ENCODE measurements at regions of chr22 and their contacts with region 1.

Region 1: GRCh38 chr22:45082795-45083194 is 73.0 kb upstream of the PHF21B start:
- DNase-seq: peak; percentile 72
- ATAC-seq: peak; percentile 80
- H3K4me3 Mint-ChIP-seq: no peak overlapping the region
- H3K27ac Mint-ChIP-seq: no peak overlapping the region
- H3K4me1 Mint-ChIP-seq: peaks cover 21% of the 10 kb centered on the region
- H3K27me3 Mint-ChIP-seq: peaks cover 5% of the 10 kb centered on the region
- CTCF ChIP-seq: peak; percentile 25; the same call in 1 of the 2 replicates

Region 2: DNA sequence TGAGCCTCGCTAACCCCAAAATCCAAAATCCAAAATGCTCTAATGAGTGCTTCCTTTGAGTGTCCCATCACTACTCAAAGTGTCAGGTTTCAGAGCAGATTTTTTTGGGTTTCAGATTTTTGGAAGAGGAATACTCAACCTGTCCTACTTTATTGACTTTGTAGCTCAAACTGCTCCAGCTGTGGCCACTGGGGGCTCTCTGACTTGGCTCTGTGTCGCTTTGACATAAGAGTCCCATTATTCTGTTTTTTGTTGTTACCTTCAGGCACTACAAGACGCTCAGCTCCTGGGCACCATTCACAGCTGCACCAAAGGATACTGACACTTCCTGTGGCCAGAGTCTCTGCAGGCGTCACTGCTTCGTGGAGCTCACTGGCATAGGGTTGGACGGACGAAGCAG is 114.1 kb before region 1 on chr22:
- CTCF ChIA-PET with region 1: interaction called, 14 read pairs
- POLR2A ChIA-PET with region 1: no interaction called
- DNase-seq: no peak
- ATAC-seq: peak; percentile 30
- H3K4me3 Mint-ChIP-seq: no peak overlapping the region
- H3K27ac Mint-ChIP-seq: peak overlapping the region; percentile 25
- H3K4me1 Mint-ChIP-seq: peaks cover 83% of the 10 kb centered on the region
- H3K27me3 Mint-ChIP-seq: no peaks in the 10 kb centered on the region
- CTCF ChIP-seq: no peak

Region 3: GRCh38 chr22:44975427-44976262 is 107.2 kb before region 1 on chr22:
- CTCF ChIA-PET with region 1: interaction called, 11 read pairs
- POLR2A ChIA-PET with region 1: no interaction called
- DNase-seq: peak; percentile 96
- ATAC-seq: peak; percentile 82
- H3K4me3 Mint-ChIP-seq: no peak overlapping the region
- H3K27ac Mint-ChIP-seq: no peak overlapping the region
- H3K4me1 Mint-ChIP-seq: peaks cover 65% of the 10 kb centered on the region
- H3K27me3 Mint-ChIP-seq: no peaks in the 10 kb centered on the region
- CTCF ChIP-seq: peak; percentile 89

Region 4: GRCh38 chr22:44990810-44991209 is 92.0 kb before region 1 on chr22:
- CTCF ChIA-PET with region 1: no interaction called
- POLR2A ChIA-PET with region 1: no interaction called
- DNase-seq: no peak
- ATAC-seq: peak; percentile 27; the same call in 1 of the 2 replicates
- H3K4me3 Mint-ChIP-seq: no peak overlapping the region
- H3K27ac Mint-ChIP-seq: peak overlapping the region; percentile 54
- H3K4me1 Mint-ChIP-seq: peaks cover 44% of the 10 kb centered on the region
- H3K27me3 Mint-ChIP-seq: no peaks in the 10 kb centered on the region
- CTCF ChIP-seq: no peak

Region 5: DNA sequence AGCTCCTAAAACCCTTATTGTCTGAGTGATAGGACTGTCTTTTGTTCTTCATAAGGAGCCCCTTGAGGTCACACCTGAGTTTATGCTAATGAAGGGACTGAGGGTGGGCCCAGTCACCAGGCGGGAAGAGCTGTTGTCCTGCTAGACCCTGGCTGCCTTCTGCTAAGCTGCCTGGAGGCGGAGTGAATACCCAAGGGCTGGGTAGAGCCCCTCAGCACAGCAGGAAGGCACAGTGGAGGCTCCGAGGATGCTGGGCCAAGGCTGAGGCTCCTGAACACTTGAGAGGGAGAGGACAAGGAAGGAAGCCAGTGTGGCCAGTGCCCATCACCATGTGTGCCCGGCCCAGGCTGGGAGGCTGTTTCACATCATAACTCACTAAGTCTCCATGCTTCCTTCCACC is 68.1 kb before region 1 on chr22:
- CTCF ChIA-PET with region 1: interaction called, 22 read pairs
- POLR2A ChIA-PET with region 1: no interaction called
- DNase-seq: peak; percentile 49
- ATAC-seq: peak; percentile 81
- H3K4me3 Mint-ChIP-seq: no peak overlapping the region
- H3K27ac Mint-ChIP-seq: no peak overlapping the region
- H3K4me1 Mint-ChIP-seq: peaks cover 29% of the 10 kb centered on the region
- H3K27me3 Mint-ChIP-seq: peaks cover 9% of the 10 kb centered on the region
- CTCF ChIP-seq: no peak

Region 6: GRCh38 chr22:45096256-45096907 is 13.6 kb after region 1 on chr22:
- CTCF ChIA-PET with region 1: interaction called, 11 read pairs
- POLR2A ChIA-PET with region 1: no interaction called
- DNase-seq: peak; percentile 74
- ATAC-seq: peak; percentile 87
- H3K4me3 Mint-ChIP-seq: no peak overlapping the region
- H3K27ac Mint-ChIP-seq: no peak overlapping the region
- H3K4me1 Mint-ChIP-seq: peaks cover 15% of the 10 kb centered on the region
- H3K27me3 Mint-ChIP-seq: peaks cover 13% of the 10 kb centered on the region
- CTCF ChIP-seq: peak; percentile 46

Measured in WTC11 (cell line).